ENCODE measurements at regions of chr17 and their contacts with region 1.

Region 1: DNA sequence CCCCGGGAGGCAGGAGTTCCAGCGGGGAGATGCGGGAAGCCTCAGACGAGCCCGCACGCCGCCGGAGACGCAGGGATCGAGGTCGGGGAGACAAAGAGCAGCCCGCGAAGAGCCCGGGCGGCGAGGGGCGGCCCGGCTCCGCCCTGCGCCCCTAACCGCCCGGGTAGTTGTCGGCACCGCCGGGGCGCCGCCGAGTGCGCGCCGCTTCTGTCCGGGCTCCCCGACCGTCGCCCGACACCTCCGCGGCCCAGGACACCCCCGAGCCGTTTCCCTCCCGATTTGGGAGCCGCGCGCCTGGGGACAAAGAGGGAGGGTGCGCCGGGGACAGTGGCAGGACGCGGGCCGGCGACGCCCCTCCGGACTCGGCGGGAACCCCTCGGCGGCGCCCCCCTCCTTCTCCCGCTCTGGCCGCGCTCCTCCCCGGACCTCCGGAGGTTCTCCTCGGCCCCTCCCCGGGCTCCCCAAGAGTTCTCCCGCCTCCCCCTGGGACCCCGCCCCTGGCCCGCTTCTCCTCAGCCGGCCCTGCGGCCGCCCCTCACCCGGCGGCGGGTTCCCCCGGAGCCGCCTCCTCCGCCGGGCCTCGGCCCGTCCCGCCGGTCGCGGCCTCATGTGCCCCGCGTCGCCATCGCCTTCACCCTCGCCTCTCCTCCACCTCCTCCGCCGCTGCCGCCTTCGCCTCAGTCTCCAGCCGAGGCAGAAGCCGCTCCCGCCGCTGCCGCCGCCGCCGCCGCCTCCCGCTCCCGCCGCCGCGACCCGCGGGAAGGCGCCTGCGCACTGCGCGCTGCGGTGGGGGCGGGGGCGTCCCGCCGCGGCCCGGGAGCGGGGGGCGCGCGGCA is at the start of gene GJC1:
- DNase-seq: peak; percentile 76
- ATAC-seq: peak; percentile 54
- H3K4me3 Mint-ChIP-seq: peak within 1 kb of the TSS; percentile 93
- H3K27ac Mint-ChIP-seq: peak within 1 kb of the TSS; percentile 96
- H3K4me1 Mint-ChIP-seq: peaks cover 47% of the 10 kb centered on the region
- H3K27me3 Mint-ChIP-seq: peaks cover 2% of the 10 kb centered on the region
- CTCF ChIP-seq: no peak
- total RNA-seq, gene GJC1: 102 to 107 TPM (median 104 TPM) in 3 replicates

Region 2: GRCh38 chr17:44556832-44557606 is 272.7 kb before region 1 on chr17 and contains the start of gene FZD2:
- CTCF ChIA-PET with region 1: no interaction called
- POLR2A ChIA-PET with region 1: no interaction called
- DNase-seq: peak; percentile 91
- ATAC-seq: peak; percentile 77
- H3K4me3 Mint-ChIP-seq: peak within 1 kb of the TSS; percentile 94
- H3K27ac Mint-ChIP-seq: peak within 1 kb of the TSS; percentile 100
- H3K4me1 Mint-ChIP-seq: peaks cover 54% of the 10 kb centered on the region
- H3K27me3 Mint-ChIP-seq: peaks cover 49% of the 10 kb centered on the region
- CTCF ChIP-seq: no peak
- total RNA-seq, gene FZD2: 37.6 to 42.8 TPM (median 38.5 TPM) in 3 replicates

Region 3: GRCh38 chr17:44844390-44844830 is 14.7 kb after region 1 on chr17:
- CTCF ChIA-PET with region 1: interaction called, 23 read pairs
- POLR2A ChIA-PET with region 1: no interaction called
- DNase-seq: no peak
- ATAC-seq: peak; percentile 54
- H3K4me3 Mint-ChIP-seq: no peak overlapping the region
- H3K27ac Mint-ChIP-seq: peak overlapping the region; percentile 60; the same call in 1 of the 2 replicates
- H3K4me1 Mint-ChIP-seq: peaks cover 45% of the 10 kb centered on the region
- H3K27me3 Mint-ChIP-seq: no peaks in the 10 kb centered on the region
- CTCF ChIP-seq: no peak